IMR-90 (cell line): ENCODE measurements at regions of chr4 and their contacts with region 1.

Region 1: GRCh38 chr4:39062094-39062769 is at the start of gene KLHL5:
- DNase-seq: no peak
- ATAC-seq: no peak; the same call in 1 of the 2 replicates
- H3K4me3 ChIP-seq: no peak within 1 kb of the TSS
- H3K27ac ChIP-seq: no peak within 1 kb of the TSS
- H3K4me1 ChIP-seq: peaks cover 6% of the 10 kb centered on the region
- H3K27me3 ChIP-seq: no peaks in the 10 kb centered on the region
- CTCF ChIP-seq: no peak
- POLR2A ChIP-seq: no peak
- RAD21 ChIP-seq: no peak
- total RNA-seq, gene KLHL5: 97.7 and 134 TPM in 2 replicates

Region 2: GRCh38 chr4:38867478-38868058 is 194.7 kb before region 1 on chr4 and contains the start of gene FAM114A1:
- CTCF ChIA-PET with region 1: no interaction called
- POLR2A ChIA-PET with region 1: no interaction called
- dilution Hi-C with region 1: no loop called
- in situ Hi-C with region 1: no loop called
- intact Hi-C with region 1: no loop called
- DNase-seq: peak; percentile 80
- ATAC-seq: peak; percentile 94
- H3K4me3 ChIP-seq: peak within 1 kb of the TSS; percentile 92
- H3K27ac ChIP-seq: peak within 1 kb of the TSS; percentile 98
- H3K4me1 ChIP-seq: peaks cover 20% of the 10 kb centered on the region
- H3K27me3 ChIP-seq: no peaks in the 10 kb centered on the region
- CTCF ChIP-seq: no peak
- POLR2A ChIP-seq: peak; percentile 81
- RAD21 ChIP-seq: no peak
- total RNA-seq, gene FAM114A1: 507 and 649 TPM in 2 replicates

Region 3: DNA sequence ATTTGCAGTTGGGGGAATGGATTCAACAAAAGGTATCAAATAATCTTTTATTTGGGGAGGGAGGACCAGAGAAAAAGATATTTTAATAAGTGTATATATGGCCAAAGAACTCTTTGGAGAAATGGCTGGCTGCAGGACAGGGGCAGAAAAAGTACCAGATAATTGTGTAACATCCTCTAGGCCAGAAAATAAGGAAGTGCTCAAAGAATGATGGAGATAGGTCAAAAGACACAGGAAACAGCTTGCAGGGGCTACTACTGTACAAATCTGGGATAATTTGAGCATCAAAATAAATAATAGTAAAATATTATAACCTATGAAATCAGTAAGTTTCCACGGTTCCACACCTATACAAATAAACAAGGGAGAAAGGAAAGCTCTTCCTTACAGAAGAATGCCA is 34.6 kb after region 1 on chr4:
- CTCF ChIA-PET with region 1: no interaction called
- POLR2A ChIA-PET with region 1: no interaction called
- dilution Hi-C with region 1: no loop called
- in situ Hi-C with region 1: no loop called
- intact Hi-C with region 1: loop called (anchors 5 kb)
- DNase-seq: no peak
- ATAC-seq: no peak
- H3K4me3 ChIP-seq: no peak overlapping the region
- H3K27ac ChIP-seq: no peak overlapping the region
- H3K4me1 ChIP-seq: no peaks in the 10 kb centered on the region
- H3K27me3 ChIP-seq: no peaks in the 10 kb centered on the region
- CTCF ChIP-seq: no peak
- POLR2A ChIP-seq: no peak
- RAD21 ChIP-seq: no peak

Region 4: DNA sequence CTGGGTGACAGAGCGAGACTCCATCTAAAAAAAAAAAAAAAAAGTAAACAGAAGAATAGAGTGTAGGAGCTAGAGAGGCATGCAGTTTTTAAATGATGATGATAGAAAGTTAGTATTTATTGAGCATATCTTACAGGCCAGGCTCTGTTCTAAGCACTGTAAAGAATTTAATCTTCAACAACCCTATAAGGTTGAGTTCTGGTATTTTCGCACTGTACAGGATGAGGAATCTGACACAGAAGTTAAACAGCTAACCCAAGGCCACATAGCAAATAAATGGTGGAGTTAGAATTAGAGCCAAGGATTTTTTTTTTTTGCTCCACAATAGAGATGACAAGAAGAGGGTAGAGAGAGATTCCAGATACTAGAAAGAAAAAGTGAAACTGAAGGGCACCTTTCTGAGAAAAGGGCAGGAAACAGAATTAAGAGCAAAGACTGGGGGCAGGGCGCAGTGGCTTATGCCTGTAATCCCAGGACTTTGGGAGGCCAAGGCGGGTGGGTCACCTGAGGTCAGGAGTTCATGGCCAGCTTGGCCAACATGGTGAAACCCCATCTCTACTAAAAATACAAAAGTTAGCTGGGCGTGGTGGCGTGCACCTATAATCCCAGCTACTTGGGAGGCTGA is 55.9 kb after region 1 on chr4:
- CTCF ChIA-PET with region 1: no interaction called
- POLR2A ChIA-PET with region 1: no interaction called
- dilution Hi-C with region 1: no loop called
- in situ Hi-C with region 1: no loop called
- intact Hi-C with region 1: no loop called
- DNase-seq: no peak
- ATAC-seq: no peak
- H3K4me3 ChIP-seq: no peak overlapping the region
- H3K27ac ChIP-seq: no peak overlapping the region
- H3K4me1 ChIP-seq: peaks cover 11% of the 10 kb centered on the region
- H3K27me3 ChIP-seq: no peaks in the 10 kb centered on the region
- CTCF ChIP-seq: no peak
- POLR2A ChIP-seq: no peak
- RAD21 ChIP-seq: no peak